Activated B cell treated with CpG ODN at 0.5 μM for 24 hours (primary cell): ENCODE measurements at regions of chr22 and their contacts with region 1.

Region 1: GRCh38 chr22:45235101-45235777 is 5.5 kb downstream of the KIAA0930 start:
- DNase-seq: peak; percentile 64
- ATAC-seq: peak; percentile 93
- H3K4me3 Mint-ChIP-seq: peak overlapping the region; percentile 70
- H3K27ac Mint-ChIP-seq: peak overlapping the region; percentile 88
- H3K4me1 Mint-ChIP-seq: peaks cover 86% of the 10 kb centered on the region
- H3K27me3 Mint-ChIP-seq: no peaks in the 10 kb centered on the region
- CTCF ChIP-seq: no peak

Region 2: GRCh38 chr22:45072322-45072903 is 162.8 kb before region 1 on chr22:
- CTCF ChIA-PET with region 1: no interaction called
- POLR2A ChIA-PET with region 1: no interaction called
- intact Hi-C with region 1: no loop called
- DNase-seq: no peak
- ATAC-seq: no peak
- H3K4me3 Mint-ChIP-seq: no peak overlapping the region
- H3K27ac Mint-ChIP-seq: no peak overlapping the region
- H3K4me1 Mint-ChIP-seq: no peaks in the 10 kb centered on the region
- H3K27me3 Mint-ChIP-seq: peaks cover 41% of the 10 kb centered on the region
- CTCF ChIP-seq: no peak

Region 3: DNA sequence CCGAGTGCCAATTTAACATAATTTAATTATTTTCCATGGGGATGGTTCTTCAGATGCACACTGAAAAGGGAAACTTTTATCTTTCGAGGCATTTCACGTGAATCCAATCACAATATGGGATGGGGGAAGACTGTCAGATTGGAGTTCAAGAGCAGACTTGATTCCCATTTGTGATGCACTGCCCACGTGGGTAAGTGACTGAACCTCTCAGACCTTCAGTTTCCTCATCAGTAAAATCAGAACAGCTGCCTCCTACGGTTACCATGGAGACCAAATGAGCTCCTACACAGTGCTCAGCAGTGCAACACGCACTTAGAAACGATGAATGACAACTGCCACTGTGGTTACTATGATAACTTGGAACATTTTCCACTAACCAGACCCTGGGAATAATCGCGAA is 16.3 kb before region 1 on chr22:
- CTCF ChIA-PET with region 1: interaction called, 4 read pairs
- POLR2A ChIA-PET with region 1: interaction called, 5 read pairs
- intact Hi-C with region 1: loop called (anchors 2 kb)
- DNase-seq: no peak
- ATAC-seq: peak; percentile 96
- H3K4me3 Mint-ChIP-seq: no peak overlapping the region
- H3K27ac Mint-ChIP-seq: peak overlapping the region; percentile 46
- H3K4me1 Mint-ChIP-seq: peaks cover 60% of the 10 kb centered on the region
- H3K27me3 Mint-ChIP-seq: no peaks in the 10 kb centered on the region
- CTCF ChIP-seq: no peak

Region 4: DNA sequence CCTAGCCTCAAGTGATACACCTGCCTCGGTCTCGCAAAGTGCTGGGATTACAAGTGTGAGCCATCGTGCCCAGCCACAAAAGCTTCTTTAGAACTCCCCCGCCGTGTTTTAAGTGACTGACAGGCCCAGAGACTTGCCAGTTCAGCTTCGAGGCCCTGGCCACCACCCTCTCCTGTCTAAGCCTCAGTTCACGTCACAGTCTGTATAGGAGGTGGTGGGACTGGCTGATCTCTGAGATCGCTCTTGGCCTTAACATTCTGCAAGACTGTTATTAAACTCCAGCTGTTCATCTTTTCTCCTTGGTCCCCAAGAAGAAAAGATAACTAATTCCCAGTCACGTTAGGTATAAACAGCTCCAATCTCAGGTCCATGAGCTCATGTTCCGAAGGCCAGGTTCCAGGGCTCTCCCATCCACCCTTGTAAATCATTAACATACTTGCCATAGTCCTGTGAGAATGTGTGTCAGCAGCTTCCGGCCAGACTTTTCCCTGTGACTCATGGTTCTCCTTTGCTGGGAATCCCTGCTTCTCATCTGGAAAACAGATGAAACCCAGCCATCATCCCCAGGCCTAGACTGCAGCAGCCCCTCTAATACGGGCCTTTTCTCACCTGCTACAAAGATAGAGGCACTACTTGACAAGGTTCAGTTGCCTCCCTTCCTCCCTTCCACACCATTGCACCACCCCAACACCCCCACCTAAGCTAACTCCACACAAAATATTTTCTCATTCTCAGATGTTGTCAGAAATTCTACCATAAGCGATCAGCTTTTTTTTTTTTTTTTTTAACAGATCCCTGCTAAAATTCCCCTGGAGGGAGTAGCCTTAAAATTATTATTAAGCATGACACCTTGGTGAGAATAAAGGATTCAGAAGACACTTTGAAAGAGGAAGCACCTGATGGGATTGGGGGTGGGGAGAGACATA is 11.1 kb after region 1 on chr22:
- CTCF ChIA-PET with region 1: interaction called, 4 read pairs
- POLR2A ChIA-PET with region 1: interaction called, 10 read pairs
- intact Hi-C with region 1: no loop called
- DNase-seq: no peak
- ATAC-seq: peak; percentile 53
- H3K4me3 Mint-ChIP-seq: peak overlapping the region; percentile 17
- H3K27ac Mint-ChIP-seq: peak overlapping the region; percentile 87
- H3K4me1 Mint-ChIP-seq: peaks cover 43% of the 10 kb centered on the region
- H3K27me3 Mint-ChIP-seq: no peaks in the 10 kb centered on the region
- CTCF ChIP-seq: no peak